IMR-90 (cell line): ENCODE measurements at regions of chr4 and their contacts with region 1.

Region 1: DNA sequence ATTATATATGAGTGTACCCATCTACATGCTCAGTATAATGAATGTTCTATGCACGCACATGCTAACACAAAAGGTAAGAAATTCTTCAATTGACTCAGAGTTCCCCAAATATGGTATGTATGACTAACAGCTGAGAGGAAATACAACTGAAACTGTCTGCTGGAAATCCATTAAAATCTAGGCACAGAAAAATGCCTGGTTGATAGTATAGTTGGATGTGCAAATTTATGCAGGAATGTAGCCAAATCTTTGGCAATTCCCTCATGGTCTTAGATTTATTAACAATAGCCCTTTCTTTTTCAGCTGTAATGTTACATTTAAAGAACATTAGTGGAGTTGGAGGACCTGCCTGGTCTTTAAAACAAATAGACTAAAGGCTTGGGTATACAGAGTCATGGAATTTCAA is 5.5 kb downstream of the CAMK2D start:
- DNase-seq: peak; percentile 70
- ATAC-seq: peak; percentile 25
- H3K4me3 ChIP-seq: no peak overlapping the region
- H3K27ac ChIP-seq: peak overlapping the region; percentile 13; the same call in 1 of the 2 replicates
- H3K4me1 ChIP-seq: 0 out of 2 replicates have a peak, but pooled peaks cover 1% of the 10 kb centered on the region
- H3K27me3 ChIP-seq: no peaks in the 10 kb centered on the region
- CTCF ChIP-seq: no peak
- POLR2A ChIP-seq: no peak
- RAD21 ChIP-seq: no peak

Region 2: GRCh38 chr4:113468165-113469022 is 287.6 kb before region 1 on chr4:
- CTCF ChIA-PET with region 1: no interaction called
- POLR2A ChIA-PET with region 1: no interaction called
- dilution Hi-C with region 1: no loop called
- in situ Hi-C with region 1: no loop called
- intact Hi-C with region 1: loop called (anchors 1 kb)
- DNase-seq: peak; percentile 100
- ATAC-seq: peak; percentile 95
- H3K4me3 ChIP-seq: peak overlapping the region; percentile 16; the same call in 1 of the 2 replicates
- H3K27ac ChIP-seq: peak overlapping the region; percentile 75
- H3K4me1 ChIP-seq: peaks cover 5% of the 10 kb centered on the region; the same call in 1 of the 2 replicates
- H3K27me3 ChIP-seq: no peaks in the 10 kb centered on the region
- CTCF ChIP-seq: no peak
- POLR2A ChIP-seq: peak; percentile 72
- RAD21 ChIP-seq: peak; percentile 10; the same call in 1 of the 2 replicates

Region 3: DNA sequence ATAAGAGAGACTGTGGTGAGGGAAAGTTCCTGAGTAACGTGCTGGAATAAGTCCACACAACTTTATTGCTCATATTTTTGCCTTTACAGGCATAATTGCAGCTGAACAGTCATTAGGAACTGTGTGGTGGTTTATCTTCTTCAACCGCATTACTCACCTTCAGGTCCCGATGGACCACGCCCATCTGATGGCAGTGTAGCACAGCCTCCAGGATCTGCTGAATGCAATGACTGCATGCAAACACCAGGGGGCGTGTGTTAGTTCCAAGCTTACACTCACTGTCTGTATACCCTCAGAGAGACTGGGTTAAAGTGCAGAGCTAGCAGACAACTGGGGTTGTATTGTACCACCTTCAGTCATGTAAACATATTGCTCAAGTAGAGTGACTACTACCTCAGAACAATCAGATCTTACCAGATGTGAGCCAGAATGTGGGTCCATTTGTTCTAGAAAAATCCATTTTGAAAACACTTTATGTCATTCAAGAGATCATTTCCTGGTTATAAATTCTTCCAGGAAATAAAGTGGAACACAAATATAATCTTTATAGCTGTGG is 208.4 kb before region 1 on chr4:
- CTCF ChIA-PET with region 1: interaction called, 3 read pairs
- POLR2A ChIA-PET with region 1: no interaction called
- dilution Hi-C with region 1: no loop called
- in situ Hi-C with region 1: loop called (anchors 10 kb)
- intact Hi-C with region 1: loop called (anchors 1 kb)
- DNase-seq: peak; percentile 95
- ATAC-seq: peak; percentile 99
- H3K4me3 ChIP-seq: no peak overlapping the region
- H3K27ac ChIP-seq: no peak overlapping the region
- H3K4me1 ChIP-seq: no peaks in the 10 kb centered on the region
- H3K27me3 ChIP-seq: no peaks in the 10 kb centered on the region
- CTCF ChIP-seq: peak; percentile 90
- POLR2A ChIP-seq: no peak
- RAD21 ChIP-seq: peak; percentile 78

Region 4: GRCh38 chr4:113684534-113685091 is 71.4 kb before region 1 on chr4:
- CTCF ChIA-PET with region 1: no interaction called
- POLR2A ChIA-PET with region 1: no interaction called
- dilution Hi-C with region 1: no loop called
- in situ Hi-C with region 1: no loop called
- intact Hi-C with region 1: loop called (anchors 5 kb)
- DNase-seq: peak; percentile 84
- ATAC-seq: peak; percentile 87
- H3K4me3 ChIP-seq: no peak overlapping the region
- H3K27ac ChIP-seq: peak overlapping the region; percentile 9; the same call in 1 of the 2 replicates
- H3K4me1 ChIP-seq: peaks cover 6% of the 10 kb centered on the region
- H3K27me3 ChIP-seq: no peaks in the 10 kb centered on the region
- CTCF ChIP-seq: peak; percentile 52
- POLR2A ChIP-seq: no peak
- RAD21 ChIP-seq: peak; percentile 60

Region 5: DNA sequence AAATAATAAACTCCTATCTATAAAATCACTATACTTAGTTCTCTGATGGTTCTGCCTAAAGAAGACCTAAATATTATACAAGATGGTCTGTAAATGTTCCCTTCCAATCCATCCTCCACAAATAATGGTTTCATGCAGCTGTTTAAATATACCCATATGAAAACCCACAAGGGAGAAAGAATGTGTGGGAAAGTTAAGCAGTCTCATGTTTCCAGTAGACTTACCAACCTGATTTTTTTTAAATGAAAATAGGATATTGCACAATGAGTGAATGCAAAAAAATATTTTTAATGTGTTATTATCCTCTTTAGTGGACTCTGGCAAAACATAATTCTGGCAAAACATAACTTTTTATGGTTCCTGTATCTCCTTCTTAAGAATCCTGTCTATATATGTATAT is 17.8 kb before region 1 on chr4:
- CTCF ChIA-PET with region 1: no interaction called
- POLR2A ChIA-PET with region 1: no interaction called
- dilution Hi-C with region 1: no loop called
- in situ Hi-C with region 1: no loop called
- intact Hi-C with region 1: no loop called
- DNase-seq: peak; percentile 83
- ATAC-seq: peak; percentile 78
- H3K4me3 ChIP-seq: no peak overlapping the region
- H3K27ac ChIP-seq: no peak overlapping the region
- H3K4me1 ChIP-seq: peaks cover 2% of the 10 kb centered on the region; the same call in 1 of the 2 replicates
- H3K27me3 ChIP-seq: no peaks in the 10 kb centered on the region
- CTCF ChIP-seq: no peak
- POLR2A ChIP-seq: no peak
- RAD21 ChIP-seq: no peak

Region 6: GRCh38 chr4:113835005-113835404 is 79.0 kb after region 1 on chr4:
- CTCF ChIA-PET with region 1: no interaction called
- POLR2A ChIA-PET with region 1: no interaction called
- dilution Hi-C with region 1: no loop called
- in situ Hi-C with region 1: no loop called
- intact Hi-C with region 1: no loop called
- DNase-seq: peak; percentile 75
- ATAC-seq: peak; percentile 50
- H3K4me3 ChIP-seq: no peak overlapping the region
- H3K27ac ChIP-seq: no peak overlapping the region
- H3K4me1 ChIP-seq: peaks cover 8% of the 10 kb centered on the region
- H3K27me3 ChIP-seq: no peaks in the 10 kb centered on the region
- CTCF ChIP-seq: no peak
- POLR2A ChIP-seq: no peak
- RAD21 ChIP-seq: no peak

Region 7: DNA sequence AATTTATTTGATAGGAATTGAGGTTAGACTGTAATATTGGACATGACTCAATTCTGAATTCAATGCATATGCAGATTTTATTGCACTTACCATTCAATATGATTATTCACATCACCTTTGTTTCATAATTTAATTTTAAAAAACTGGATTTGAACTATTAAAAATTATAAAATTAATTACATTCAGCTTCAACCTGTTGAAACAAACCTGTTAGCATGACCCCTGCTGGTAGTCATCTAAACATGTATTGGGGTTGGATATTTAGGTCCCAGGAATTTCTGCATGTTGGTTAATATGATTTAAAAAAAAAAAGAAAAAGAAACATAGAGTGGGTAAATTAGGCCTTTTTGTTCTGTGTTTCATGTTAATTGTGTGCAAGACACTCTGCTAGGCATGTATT is 137.5 kb after region 1 on chr4:
- CTCF ChIA-PET with region 1: no interaction called
- POLR2A ChIA-PET with region 1: no interaction called
- dilution Hi-C with region 1: no loop called
- in situ Hi-C with region 1: no loop called
- intact Hi-C with region 1: no loop called
- DNase-seq: peak; percentile 32
- ATAC-seq: no peak
- H3K4me3 ChIP-seq: no peak overlapping the region
- H3K27ac ChIP-seq: no peak overlapping the region
- H3K4me1 ChIP-seq: no peaks in the 10 kb centered on the region
- H3K27me3 ChIP-seq: no peaks in the 10 kb centered on the region
- CTCF ChIP-seq: peak; percentile 28
- POLR2A ChIP-seq: no peak
- RAD21 ChIP-seq: 0 out of 2 replicates have a peak, but pooled peaks have one; percentile 18